ENCODE measurements at regions of chr3 and their contacts with region 1.

Region 1: GRCh38 chr3:186540221-186540834 is 3.9 kb downstream of the CRYGS start:
- DNase-seq: peak; percentile 87
- ATAC-seq: peak; percentile 93
- H3K4me3 Mint-ChIP-seq: no peak overlapping the region
- H3K27ac Mint-ChIP-seq: peak overlapping the region; percentile 5
- H3K4me1 Mint-ChIP-seq: peaks cover 15% of the 10 kb centered on the region
- H3K27me3 Mint-ChIP-seq: no peaks in the 10 kb centered on the region

Region 2: DNA sequence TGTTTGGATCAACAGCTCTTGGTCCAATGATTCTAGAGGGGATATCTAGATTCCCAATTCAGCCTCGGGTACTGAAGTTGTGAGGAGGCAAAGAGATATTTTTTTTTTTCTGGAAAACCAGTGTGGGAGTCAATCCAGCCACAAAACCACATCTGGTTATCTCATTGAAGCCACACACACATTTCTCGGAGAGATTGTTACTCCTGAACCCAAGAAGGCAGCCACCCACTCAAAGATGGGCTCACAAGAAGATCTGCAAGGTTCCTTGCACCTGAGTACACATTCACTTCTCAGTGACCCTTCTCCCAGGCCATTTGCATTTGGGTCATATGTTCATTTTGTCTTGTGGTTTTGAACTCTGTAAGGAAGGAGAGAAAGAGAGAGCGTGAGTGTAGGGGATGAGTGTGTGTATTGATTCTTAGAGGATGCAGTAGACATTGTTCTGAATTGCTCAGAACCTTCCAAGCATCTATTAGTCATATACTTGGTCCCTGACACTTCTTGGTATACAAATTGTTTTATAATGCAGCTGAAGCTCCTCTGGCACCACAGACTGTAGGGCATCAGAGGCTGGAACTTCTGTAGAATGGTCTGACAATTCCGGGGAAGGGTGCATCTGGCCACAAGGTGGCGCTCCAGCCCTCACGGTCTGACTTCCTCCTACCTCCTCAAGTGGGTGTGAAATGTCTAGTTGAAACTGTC is 563.2 kb before region 1 on chr3:
- CTCF ChIA-PET with region 1: interaction called, 36 read pairs
- DNase-seq: peak; percentile 90
- ATAC-seq: peak; percentile 97
- H3K4me3 Mint-ChIP-seq: no peak overlapping the region
- H3K27ac Mint-ChIP-seq: no peak overlapping the region
- H3K4me1 Mint-ChIP-seq: peaks cover 14% of the 10 kb centered on the region
- H3K27me3 Mint-ChIP-seq: peaks cover 35% of the 10 kb centered on the region

Region 3: DNA sequence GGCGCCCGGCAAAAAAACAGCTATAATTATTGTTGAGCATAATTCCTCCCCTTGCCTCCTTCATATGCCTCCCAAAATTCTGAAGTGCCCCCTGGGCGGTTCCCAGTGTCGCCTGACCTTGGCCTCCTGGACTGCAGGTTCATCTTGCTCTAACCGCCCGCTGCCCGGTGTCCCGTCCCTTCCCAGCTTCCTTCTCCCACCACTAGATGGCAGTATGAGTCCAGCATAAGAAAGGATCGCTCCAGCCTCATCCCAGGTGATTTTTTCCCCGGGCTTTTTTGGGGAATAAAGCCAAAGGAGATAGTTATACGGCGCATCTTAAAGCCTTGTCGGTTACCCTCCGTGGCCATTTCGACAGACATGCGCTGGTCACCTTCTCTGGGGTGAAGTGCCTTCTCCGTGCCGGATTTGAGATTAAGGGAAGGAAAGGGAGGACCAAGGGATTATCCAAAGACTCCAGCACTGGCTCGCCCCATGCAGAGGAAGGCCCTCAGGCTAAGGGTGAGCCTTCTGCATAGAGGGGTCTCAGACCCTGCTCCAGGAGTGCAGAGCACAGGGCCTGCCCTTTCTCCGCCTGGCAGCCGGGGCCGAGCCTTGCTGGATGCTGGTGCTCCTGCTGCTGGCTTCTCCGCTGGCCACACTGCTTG is 556.7 kb before region 1 on chr3:
- CTCF ChIA-PET with region 1: interaction called, 36 read pairs
- DNase-seq: peak; percentile 61
- ATAC-seq: peak; percentile 78
- H3K4me3 Mint-ChIP-seq: no peak overlapping the region
- H3K27ac Mint-ChIP-seq: no peak overlapping the region
- H3K4me1 Mint-ChIP-seq: peaks cover 3% of the 10 kb centered on the region
- H3K27me3 Mint-ChIP-seq: peaks cover 34% of the 10 kb centered on the region

Region 4: DNA sequence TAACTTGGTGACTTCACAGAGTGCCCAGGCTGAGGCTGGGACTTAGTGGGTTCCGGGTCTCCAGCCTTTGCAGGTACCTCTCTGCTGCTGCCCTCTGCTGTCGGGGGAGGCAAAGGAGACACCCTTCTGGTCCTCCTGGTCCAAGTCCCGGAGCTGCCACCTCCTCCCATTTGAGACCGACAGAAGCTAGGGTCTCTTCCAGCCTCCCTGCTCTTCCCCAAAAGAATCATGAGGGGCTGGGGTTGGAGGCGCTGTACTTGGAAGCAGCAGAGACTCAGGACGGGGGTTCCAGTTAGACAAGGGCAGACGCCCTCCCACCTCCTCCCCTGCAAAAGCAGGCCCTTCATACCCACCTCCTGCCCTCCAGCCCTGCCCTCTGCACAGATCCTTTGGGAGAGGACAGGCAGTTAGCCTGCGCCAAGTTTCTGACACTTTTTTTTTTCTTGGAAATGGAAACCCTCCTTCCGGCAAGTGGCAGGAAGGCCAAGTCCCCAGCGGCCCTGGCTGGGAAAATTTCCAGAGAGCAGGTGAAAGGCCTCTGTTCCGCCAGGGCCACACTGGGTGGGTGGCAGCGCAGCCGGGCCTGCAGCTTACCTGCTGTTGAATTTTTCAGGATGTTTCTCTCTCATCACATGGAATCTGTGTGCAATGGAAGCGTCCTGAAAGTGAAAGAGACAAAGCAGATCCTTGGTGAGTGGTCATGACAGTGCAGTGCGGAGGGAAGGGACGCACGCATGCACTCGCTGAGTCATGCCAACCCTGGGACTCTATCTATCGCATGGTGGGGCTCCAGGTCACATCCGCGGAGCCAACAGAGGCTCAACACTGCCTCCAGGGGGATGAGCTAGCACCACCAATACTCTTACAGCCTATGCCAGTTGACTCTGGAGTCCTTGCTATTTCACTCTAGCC is 298.2 kb before region 1 on chr3:
- CTCF ChIA-PET with region 1: interaction called, 12 read pairs
- DNase-seq: peak; percentile 84
- ATAC-seq: peak; percentile 98
- H3K4me3 Mint-ChIP-seq: no peak overlapping the region
- H3K27ac Mint-ChIP-seq: no peak overlapping the region
- H3K4me1 Mint-ChIP-seq: peaks cover 10% of the 10 kb centered on the region
- H3K27me3 Mint-ChIP-seq: peaks cover 39% of the 10 kb centered on the region

Region 5: GRCh38 chr3:186251948-186252619 is 288.2 kb before region 1 on chr3:
- CTCF ChIA-PET with region 1: interaction called, 82 read pairs
- DNase-seq: no peak
- ATAC-seq: no peak
- H3K4me3 Mint-ChIP-seq: no peak overlapping the region
- H3K27ac Mint-ChIP-seq: no peak overlapping the region
- H3K4me1 Mint-ChIP-seq: peaks cover 9% of the 10 kb centered on the region
- H3K27me3 Mint-ChIP-seq: peaks cover 37% of the 10 kb centered on the region

Region 6: DNA sequence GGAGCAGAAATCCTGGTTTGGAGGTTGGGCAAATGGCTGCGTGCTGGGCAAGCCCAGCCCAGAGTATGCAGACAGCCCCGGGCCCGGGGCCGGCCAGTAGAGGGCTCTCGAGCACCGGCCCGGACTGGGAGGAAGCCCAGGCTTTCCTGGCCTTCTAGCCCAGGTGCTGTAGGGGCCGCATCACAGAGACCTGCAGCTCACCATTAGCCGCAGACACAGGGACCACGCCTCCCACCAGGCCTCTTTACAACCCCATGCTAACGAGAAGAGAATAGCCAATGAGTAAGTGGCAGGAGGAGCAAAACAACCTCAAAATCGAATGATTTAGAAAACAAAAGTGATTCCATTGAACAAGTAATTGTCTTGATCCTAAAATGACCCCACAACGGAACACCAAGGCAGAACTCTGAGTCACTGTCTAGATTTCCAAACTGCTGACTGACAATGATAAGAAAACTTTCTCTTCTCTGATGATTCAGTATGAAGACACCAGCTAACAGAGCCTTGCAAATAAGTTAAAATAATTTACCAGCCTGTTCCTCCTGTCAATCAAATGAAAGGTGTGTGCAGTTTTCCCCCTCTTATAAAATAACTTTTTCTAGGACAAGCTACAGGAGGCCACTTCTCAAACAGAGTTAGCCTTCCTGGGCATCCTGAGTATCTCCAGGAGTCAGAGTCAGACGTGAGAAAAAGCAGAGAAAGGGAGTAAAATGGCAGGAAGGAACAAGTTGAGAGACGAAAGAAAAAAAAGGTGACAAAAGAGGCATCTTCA is 280.5 kb before region 1 on chr3:
- CTCF ChIA-PET with region 1: interaction called, 82 read pairs
- DNase-seq: peak; percentile 73
- ATAC-seq: peak; percentile 98
- H3K4me3 Mint-ChIP-seq: no peak overlapping the region
- H3K27ac Mint-ChIP-seq: no peak overlapping the region
- H3K4me1 Mint-ChIP-seq: peaks cover 14% of the 10 kb centered on the region
- H3K27me3 Mint-ChIP-seq: peaks cover 11% of the 10 kb centered on the region

Region 7: GRCh38 chr3:186400662-186401061 is 139.7 kb before region 1 on chr3:
- CTCF ChIA-PET with region 1: no interaction called
- DNase-seq: no peak
- ATAC-seq: no peak
- H3K4me3 Mint-ChIP-seq: no peak overlapping the region
- H3K27ac Mint-ChIP-seq: no peak overlapping the region
- H3K4me1 Mint-ChIP-seq: no peaks in the 10 kb centered on the region
- H3K27me3 Mint-ChIP-seq: peaks cover 19% of the 10 kb centered on the region

Region 8: GRCh38 chr3:186452517-186452916 is 87.8 kb before region 1 on chr3:
- CTCF ChIA-PET with region 1: no interaction called
- DNase-seq: no peak
- ATAC-seq: no peak
- H3K4me3 Mint-ChIP-seq: no peak overlapping the region
- H3K27ac Mint-ChIP-seq: no peak overlapping the region
- H3K4me1 Mint-ChIP-seq: no peaks in the 10 kb centered on the region
- H3K27me3 Mint-ChIP-seq: peaks cover 11% of the 10 kb centered on the region

Region 9: GRCh38 chr3:186519021-186519658 is 21.2 kb before region 1 on chr3:
- CTCF ChIA-PET with region 1: interaction called, 13 read pairs
- DNase-seq: peak; percentile 74
- ATAC-seq: peak; percentile 72
- H3K4me3 Mint-ChIP-seq: no peak overlapping the region
- H3K27ac Mint-ChIP-seq: peak overlapping the region; percentile 60
- H3K4me1 Mint-ChIP-seq: peaks cover 57% of the 10 kb centered on the region
- H3K27me3 Mint-ChIP-seq: peaks cover 17% of the 10 kb centered on the region

Measured in activated CD8-positive, alpha-beta memory T cell treated with anti-CD3 and anti-CD28 coated beads, Interleukin-2, amount 10 ng/mL, durations not matched to agents 7 days and 5 days (primary cell).